ENCODE measurements at regions of chr2 and their contacts with region 1.

Region 1: GRCh38 chr2:47906157-47907038 is at the start of gene FBXO11:
- DNase-seq: peak; percentile 91 to 99 (median 94)
- ATAC-seq: peak; percentile 80
- H3K4me3 ChIP-seq: peak within 1 kb of the TSS; percentile 80 to 92
- H3K4me3 Mint-ChIP-seq: peak within 1 kb of the TSS; percentile 76
- H3K27ac ChIP-seq: peak within 1 kb of the TSS; percentile 81 to 97
- H3K27ac Mint-ChIP-seq: peak within 1 kb of the TSS; percentile 80
- H3K4me1 ChIP-seq: peaks cover 30% of the 10 kb centered on the region
- H3K4me1 Mint-ChIP-seq: peaks cover 40% of the 10 kb centered on the region
- H3K27me3 ChIP-seq: no peaks in the 10 kb centered on the region
- H3K27me3 Mint-ChIP-seq: no peaks in the 10 kb centered on the region
- CTCF ChIP-seq: no peak
- total RNA-seq, gene FBXO11: 144 to 146 TPM

Region 2: DNA sequence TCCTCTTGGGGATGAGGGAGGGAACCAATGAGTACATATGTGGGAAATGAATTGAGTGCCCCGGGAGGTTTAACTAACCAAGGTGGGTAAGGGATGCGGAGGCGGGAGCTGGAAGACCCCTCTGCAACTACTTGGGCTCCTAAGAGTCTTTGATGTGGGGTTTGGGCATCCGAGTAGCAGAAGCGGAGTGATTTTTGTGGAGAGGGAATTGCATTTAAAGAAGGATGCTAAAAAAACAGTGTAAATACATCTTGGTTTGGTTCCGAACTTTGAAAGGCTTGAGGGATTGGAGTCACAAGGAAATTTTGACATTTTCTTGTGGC is 1206.5 kb before region 1 on chr2:
- CTCF ChIA-PET with region 1: no interaction called
- POLR2A ChIA-PET with region 1: no interaction called
- intact Hi-C with region 1: loop called in 1 of 2 experiments (anchors 10 kb)
- DNase-seq: peak in 3 of 9 experiments; percentile 12 to 52 (median 28)
- ATAC-seq: no peak
- H3K4me3 ChIP-seq: peak overlapping the region; percentile 56 to 61
- H3K4me3 Mint-ChIP-seq: peak overlapping the region; percentile 95
- H3K27ac ChIP-seq: peak overlapping the region; percentile 21 to 50
- H3K27ac Mint-ChIP-seq: peak overlapping the region; percentile 94
- H3K4me1 ChIP-seq: peaks cover 13% of the 10 kb centered on the region
- H3K4me1 Mint-ChIP-seq: peaks cover 56% of the 10 kb centered on the region
- H3K27me3 ChIP-seq: no peaks in the 10 kb centered on the region
- H3K27me3 Mint-ChIP-seq: no peaks in the 10 kb centered on the region
- CTCF ChIP-seq: no peak

Region 3: DNA sequence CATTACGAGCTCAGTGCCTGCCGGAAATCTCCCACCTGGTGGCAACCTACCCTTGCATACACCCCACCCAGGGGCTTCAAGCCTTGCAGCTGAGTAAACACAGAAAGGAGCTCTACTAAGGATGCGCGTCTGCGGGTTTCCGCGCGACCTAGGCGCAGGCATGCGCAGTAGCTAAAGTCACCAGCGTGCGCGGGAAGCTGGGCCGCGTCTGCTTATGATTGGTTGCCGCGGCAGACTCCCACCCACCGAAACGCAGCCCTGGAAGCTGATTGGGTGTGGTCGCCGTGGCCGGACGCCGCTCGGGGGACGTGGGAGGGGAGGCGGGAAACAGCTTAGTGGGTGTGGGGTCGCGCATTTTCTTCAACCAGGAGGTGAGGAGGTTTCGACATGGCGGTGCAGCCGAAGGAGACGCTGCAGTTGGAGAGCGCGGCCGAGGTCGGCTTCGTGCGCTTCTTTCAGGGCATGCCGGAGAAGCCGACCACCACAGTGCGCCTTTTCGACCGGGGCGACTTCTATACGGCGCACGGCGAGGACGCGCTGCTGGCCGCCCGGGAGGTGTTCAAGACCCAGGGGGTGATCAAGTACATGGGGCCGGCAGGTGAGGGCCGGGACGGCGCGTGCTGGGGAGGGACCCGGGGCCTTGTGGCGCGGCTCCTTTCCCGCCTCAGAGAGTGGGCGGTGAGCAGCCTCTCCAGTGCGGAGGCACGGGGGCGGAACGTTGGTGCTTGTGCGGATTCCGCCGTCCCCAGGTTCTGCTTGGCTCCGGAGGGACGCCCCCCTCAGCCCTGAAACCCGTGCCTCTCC is 503.4 kb before region 1 on chr2 and contains the start of gene MSH2:
- CTCF ChIA-PET with region 1: no interaction called
- POLR2A ChIA-PET with region 1: no interaction called
- intact Hi-C with region 1: loop called (anchors 1 to 5 kb)
- DNase-seq: peak; percentile 72 to 96 (median 91)
- ATAC-seq: peak; percentile 93
- H3K4me3 ChIP-seq: peak within 1 kb of the TSS; percentile 81 to 100
- H3K4me3 Mint-ChIP-seq: peak within 1 kb of the TSS; percentile 98
- H3K27ac ChIP-seq: peak within 1 kb of the TSS; percentile 64 to 71
- H3K27ac Mint-ChIP-seq: peak within 1 kb of the TSS; percentile 94
- H3K4me1 ChIP-seq: peaks cover 15% of the 10 kb centered on the region
- H3K4me1 Mint-ChIP-seq: peaks cover 40% of the 10 kb centered on the region
- H3K27me3 ChIP-seq: no peaks in the 10 kb centered on the region
- H3K27me3 Mint-ChIP-seq: no peaks in the 10 kb centered on the region
- CTCF ChIP-seq: no peak
- total RNA-seq, gene MSH2: 5.6 to 8.8 TPM

Region 4: GRCh38 chr2:47888581-47889280 is 17.7 kb before region 1 on chr2:
- CTCF ChIA-PET with region 1: no interaction called
- POLR2A ChIA-PET with region 1: no interaction called
- intact Hi-C with region 1: loop called (anchors 1 to 2 kb)
- DNase-seq: peak in 6 of 9 experiments; percentile 7 to 87 (median 44)
- ATAC-seq: peak; percentile 94
- H3K4me3 ChIP-seq: no peak overlapping the region
- H3K4me3 Mint-ChIP-seq: peak overlapping the region; percentile 42
- H3K27ac ChIP-seq: peak overlapping the region; percentile 57 to 75
- H3K27ac Mint-ChIP-seq: peak overlapping the region; percentile 75
- H3K4me1 ChIP-seq: peaks cover 45% of the 10 kb centered on the region
- H3K4me1 Mint-ChIP-seq: peaks cover 72% of the 10 kb centered on the region
- H3K27me3 ChIP-seq: no peaks in the 10 kb centered on the region
- H3K27me3 Mint-ChIP-seq: no peaks in the 10 kb centered on the region
- CTCF ChIP-seq: no peak

Region 5: GRCh38 chr2:48107326-48107925 is 201.0 kb after region 1 on chr2:
- CTCF ChIA-PET with region 1: interaction called, 14 read pairs
- POLR2A ChIA-PET with region 1: no interaction called
- intact Hi-C with region 1: loop called (anchors 1 to 2 kb)
- DNase-seq: no peak
- ATAC-seq: no peak
- H3K4me3 ChIP-seq: no peak overlapping the region
- H3K4me3 Mint-ChIP-seq: no peak overlapping the region
- H3K27ac ChIP-seq: no peak overlapping the region
- H3K27ac Mint-ChIP-seq: no peak overlapping the region
- H3K4me1 ChIP-seq: peaks cover 11% of the 10 kb centered on the region
- H3K4me1 Mint-ChIP-seq: peaks cover 17% of the 10 kb centered on the region
- H3K27me3 ChIP-seq: peaks cover 0 to 4% of the 10 kb centered on the region in 2 experiments
- H3K27me3 Mint-ChIP-seq: no peaks in the 10 kb centered on the region
- CTCF ChIP-seq: no peak

Region 6: DNA sequence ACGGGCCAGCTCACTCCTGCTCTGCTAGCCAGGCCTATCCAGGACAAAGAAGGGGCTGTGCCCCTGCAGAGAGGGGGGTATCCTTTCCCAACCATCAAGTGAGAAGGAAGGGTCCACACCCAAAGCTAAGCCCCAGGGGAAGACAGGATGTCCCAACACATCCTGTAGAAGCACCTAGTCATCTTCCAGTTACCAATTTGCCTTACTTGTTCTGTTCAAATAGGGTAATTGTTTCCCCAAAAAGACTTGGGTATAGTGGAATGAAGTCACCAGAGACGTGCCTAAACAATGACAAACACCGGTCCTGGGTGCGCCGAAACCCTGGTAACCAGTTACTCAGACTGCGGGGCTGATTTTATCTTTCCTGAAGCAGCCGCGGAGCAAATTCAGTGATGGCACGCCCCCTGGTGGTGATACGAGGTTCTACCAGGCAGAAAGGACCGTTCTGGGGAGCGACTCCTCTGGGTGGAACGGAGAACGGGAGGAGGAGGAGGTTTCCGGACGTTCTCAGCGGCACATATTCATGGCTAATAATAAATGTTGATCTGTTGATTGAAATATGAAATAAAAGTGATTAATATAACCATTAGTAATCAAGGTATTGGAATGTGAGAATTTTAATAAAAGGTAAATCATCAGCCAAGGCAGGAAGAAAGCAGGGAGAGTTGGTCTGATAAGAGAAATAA is 514.3 kb after region 1 on chr2:
- CTCF ChIA-PET with region 1: no interaction called
- POLR2A ChIA-PET with region 1: no interaction called
- intact Hi-C with region 1: loop called (anchors 1 to 5 kb)
- DNase-seq: peak; percentile 82 to 97 (median 90)
- ATAC-seq: peak; percentile 89
- H3K4me3 ChIP-seq: no peak overlapping the region
- H3K4me3 Mint-ChIP-seq: peak overlapping the region; percentile 40
- H3K27ac ChIP-seq: no peak overlapping the region
- H3K27ac Mint-ChIP-seq: peak overlapping the region; percentile 3
- H3K4me1 ChIP-seq: peaks cover 21% of the 10 kb centered on the region
- H3K4me1 Mint-ChIP-seq: peaks cover 35% of the 10 kb centered on the region
- H3K27me3 ChIP-seq: no peaks in the 10 kb centered on the region
- H3K27me3 Mint-ChIP-seq: no peaks in the 10 kb centered on the region
- CTCF ChIP-seq: peak; percentile 99